OCI-LY7 (cell line): ENCODE measurements at regions of chr16 and their contacts with region 1.

Region 1: DNA sequence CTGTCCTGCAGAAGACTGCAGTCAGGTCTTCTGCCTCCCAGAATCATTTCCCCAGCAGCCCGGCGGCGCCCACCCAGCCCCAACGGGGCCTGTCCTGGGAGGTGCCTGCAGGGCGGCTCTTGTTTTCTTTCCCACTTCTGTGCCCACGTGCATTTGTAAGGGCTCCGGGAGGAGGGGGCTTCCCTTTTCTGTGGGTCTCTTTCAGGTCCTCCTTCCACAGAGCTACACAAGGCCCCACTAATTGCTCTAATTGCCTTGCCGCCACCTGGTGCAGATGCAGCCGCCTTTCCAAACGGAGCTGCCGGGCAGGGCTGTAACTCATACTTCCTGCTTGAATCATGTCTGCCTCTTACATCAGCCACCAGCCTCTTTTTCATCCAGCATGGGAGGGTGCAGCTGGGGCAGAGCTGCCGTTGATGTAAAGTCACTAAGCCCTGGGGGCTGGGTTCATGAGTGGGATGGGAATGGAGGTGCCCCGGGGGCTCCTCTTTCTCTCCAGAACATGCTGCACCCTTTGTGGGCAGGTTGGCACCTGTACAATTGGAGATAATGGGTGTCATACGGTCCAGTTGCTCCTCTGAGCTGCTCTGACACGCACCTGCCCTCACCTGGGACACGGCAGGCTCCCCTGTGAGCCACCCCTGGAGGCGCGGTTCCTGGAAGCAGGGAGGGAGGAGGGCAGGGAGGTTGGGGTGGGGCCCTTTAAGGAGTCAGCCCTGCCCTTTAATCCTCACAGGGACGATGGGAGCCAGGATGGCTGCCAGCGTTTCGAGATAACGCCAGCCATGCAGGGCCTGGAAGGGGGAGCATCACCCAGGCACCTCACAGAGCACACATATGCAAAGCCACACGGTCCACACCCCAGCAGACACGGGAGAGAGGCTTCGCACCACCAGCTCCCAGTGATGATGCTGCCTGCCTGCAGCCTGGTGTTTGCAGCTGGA is 41.1 kb upstream of the KLHDC4 start:
- DNase-seq: peak; percentile 95
- H3K4me3 ChIP-seq: peak overlapping the region; percentile 65
- H3K27ac ChIP-seq: peak overlapping the region; percentile 97
- H3K4me1 ChIP-seq: peaks cover 91% of the 10 kb centered on the region
- CTCF ChIP-seq: 0 out of 2 replicates have a peak, but pooled peaks have one; percentile 24

Region 2: DNA sequence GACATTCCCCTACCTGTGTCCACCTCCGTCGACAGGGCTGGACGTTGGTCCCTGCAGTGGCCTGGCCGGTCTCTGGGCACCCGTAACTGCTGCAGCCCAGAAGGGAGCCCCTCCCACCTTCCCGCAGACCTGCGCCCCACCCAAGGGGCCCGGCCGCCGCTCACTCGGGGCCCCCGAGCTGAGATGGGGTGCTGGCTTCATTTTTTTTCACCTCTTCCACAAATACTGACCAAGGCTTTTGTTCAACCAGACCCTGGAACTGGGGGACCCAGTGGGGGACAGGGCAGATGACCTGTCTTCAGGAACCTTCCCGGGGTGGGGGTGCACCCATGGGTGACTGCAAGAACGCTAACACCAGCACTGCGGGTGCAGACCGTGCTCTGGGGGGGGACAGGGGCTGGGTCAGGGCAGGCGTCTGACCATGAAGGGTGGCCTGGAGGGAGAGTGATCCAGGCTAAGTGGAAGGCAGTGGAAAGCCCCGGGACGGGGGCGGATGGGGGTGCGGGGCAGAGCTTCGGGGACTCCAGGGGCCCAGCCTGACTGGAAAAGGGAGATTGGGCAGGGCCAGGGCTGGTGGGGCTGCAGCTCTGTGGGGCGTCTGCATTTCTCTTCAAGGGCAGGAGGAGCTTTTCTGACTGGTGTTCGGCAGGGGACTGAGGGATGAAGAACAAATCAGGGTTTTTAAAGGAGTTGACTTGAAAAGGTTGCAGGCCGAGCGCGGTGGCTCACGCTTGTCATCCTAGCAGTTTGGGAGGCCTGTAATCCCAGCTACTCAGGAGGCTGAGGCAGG is 20.1 kb after region 1 on chr16:
- CTCF ChIA-PET with region 1: no interaction called
- POLR2A ChIA-PET with region 1: interaction called, 5 read pairs
- intact Hi-C with region 1: loop called (anchors 1 kb)
- DNase-seq: no peak
- H3K4me3 ChIP-seq: no peak overlapping the region
- H3K27ac ChIP-seq: no peak overlapping the region
- H3K4me1 ChIP-seq: peaks cover 43% of the 10 kb centered on the region
- CTCF ChIP-seq: no peak

Region 3: DNA sequence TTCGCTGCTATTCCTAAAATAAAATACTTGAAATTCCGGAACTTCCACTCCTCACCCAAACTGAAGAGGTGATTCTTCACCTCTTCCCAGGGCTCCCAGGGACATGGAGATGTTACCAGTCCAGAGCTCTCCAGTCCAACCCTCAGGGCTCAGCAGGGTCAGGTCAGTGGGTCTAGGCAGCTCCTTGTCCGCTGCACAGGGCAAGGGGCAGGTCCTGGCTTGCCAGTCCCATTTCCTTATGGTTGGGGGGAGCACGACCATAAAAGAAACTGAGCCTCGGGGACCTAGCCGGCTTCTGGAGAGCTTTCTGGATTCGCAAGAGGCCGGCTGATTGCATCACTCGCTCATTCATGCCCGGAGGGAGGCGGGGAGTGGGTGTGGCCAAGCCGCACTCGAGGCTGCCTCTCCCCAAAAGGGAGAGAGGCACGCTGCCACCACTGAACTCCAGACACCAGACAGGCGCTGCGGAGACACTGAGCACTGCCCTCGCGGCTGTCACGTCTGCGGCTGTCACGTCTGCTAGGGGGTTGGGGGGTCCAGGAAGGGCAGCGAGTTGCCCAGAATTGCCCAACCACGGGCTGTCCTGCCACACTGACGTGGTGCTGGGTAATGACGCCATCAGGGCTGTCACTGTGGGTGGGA is 46.7 kb after region 1 on chr16:
- CTCF ChIA-PET with region 1: interaction called, 3 read pairs
- POLR2A ChIA-PET with region 1: interaction called, 12 read pairs
- intact Hi-C with region 1: loop called (anchors 2 kb)
- DNase-seq: peak; percentile 95
- H3K4me3 ChIP-seq: peak overlapping the region; percentile 53
- H3K27ac ChIP-seq: peak overlapping the region; percentile 85
- H3K4me1 ChIP-seq: peaks cover 91% of the 10 kb centered on the region
- CTCF ChIP-seq: no peak

Region 4: DNA sequence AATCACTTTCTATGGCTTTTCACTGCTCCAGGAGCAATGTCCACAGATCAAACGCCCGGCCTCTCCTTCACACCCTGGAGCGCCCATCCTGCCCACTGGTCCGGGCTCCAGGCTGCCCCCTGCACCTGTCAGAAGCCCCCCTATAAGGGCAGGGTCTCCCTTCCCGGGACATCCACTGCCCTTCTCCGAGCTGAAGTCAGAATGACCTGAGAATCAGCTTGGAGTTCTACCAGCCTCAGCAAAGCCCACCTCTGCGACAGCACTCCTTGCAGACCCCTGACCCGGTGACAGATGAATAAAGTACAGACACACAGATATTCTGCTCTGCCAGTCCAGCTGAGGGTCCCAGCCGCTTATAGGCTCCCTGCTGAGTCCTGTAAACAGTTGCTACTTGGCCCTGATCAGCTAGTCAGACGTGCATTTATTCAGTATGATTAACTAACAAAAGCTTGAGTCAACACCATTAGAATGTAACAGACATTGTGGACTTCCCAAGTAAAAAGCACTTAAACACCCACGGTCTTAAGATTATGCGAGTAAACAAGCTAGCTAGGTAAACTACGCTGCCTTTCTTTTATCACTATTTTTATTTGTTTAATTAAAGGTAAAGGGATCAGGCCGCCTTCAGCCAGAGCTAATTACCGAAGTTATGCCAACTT is 57.6 kb after region 1 on chr16:
- CTCF ChIA-PET with region 1: no interaction called
- POLR2A ChIA-PET with region 1: interaction called, 10 read pairs
- intact Hi-C with region 1: no loop called
- DNase-seq: no peak
- H3K4me3 ChIP-seq: peak overlapping the region; percentile 99
- H3K27ac ChIP-seq: peak overlapping the region; percentile 5
- H3K4me1 ChIP-seq: peaks cover 56% of the 10 kb centered on the region
- CTCF ChIP-seq: no peak

Region 5: GRCh38 chr16:87993901-87994300 is 187.0 kb after region 1 on chr16:
- CTCF ChIA-PET with region 1: no interaction called
- POLR2A ChIA-PET with region 1: no interaction called
- intact Hi-C with region 1: no loop called
- DNase-seq: no peak
- H3K4me3 ChIP-seq: no peak overlapping the region
- H3K27ac ChIP-seq: no peak overlapping the region
- H3K4me1 ChIP-seq: no peaks in the 10 kb centered on the region
- CTCF ChIP-seq: no peak